AG04450 (cell line): ENCODE measurements at regions of chr7 and their contacts with region 1.

Region 1: DNA sequence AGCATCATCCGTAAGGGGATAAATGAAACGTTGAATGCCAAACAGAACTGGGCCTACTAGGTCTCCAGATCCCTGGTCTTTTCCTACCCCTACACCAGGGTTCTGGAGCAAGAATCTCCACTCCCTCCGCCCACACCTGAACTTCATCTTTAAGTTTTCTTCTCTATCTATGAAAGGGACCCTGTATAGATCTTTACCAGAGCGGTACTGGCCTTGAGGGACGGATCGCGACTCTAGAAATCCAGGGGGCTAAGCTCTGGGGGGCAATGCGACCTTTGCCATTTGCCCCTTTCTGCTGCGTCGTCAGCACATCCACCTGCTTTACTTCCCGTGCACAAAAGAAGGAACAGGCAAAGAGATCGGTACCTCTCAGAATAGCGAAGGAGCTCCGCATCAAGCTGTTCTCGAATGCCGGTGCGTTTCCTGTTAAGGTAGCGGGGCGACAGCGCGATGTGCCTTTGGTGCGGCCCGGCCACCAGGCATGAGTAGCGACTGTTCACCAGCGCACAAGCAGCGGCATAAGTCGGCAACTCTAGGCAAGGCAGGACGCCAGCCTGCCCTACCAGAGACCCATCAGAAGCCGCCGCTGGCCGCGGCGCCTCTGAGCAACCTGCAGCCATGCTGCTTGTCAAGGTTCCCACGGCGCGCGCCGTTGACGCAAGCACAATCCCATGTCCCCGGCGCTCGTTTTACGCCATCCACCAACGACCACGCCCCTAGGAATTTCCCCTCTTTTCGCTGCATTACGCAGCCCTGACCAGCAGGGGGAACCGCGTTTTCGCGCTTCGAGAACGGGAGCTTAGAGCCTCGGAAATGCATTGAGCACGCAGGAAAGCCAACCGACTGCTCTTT is at the start of gene POLR1F:
- DNase-seq: peak; percentile 85
- H3K4me3 ChIP-seq: peak within 1 kb of the TSS; percentile 98
- H3K27ac ChIP-seq: peak within 1 kb of the TSS; percentile 47
- H3K27me3 ChIP-seq: no peaks in the 10 kb centered on the region
- CTCF ChIP-seq: peak; percentile 93
- polyA plus RNA-seq, gene POLR1F: 14.8 and 23.6 TPM in 2 replicates

Region 2: DNA sequence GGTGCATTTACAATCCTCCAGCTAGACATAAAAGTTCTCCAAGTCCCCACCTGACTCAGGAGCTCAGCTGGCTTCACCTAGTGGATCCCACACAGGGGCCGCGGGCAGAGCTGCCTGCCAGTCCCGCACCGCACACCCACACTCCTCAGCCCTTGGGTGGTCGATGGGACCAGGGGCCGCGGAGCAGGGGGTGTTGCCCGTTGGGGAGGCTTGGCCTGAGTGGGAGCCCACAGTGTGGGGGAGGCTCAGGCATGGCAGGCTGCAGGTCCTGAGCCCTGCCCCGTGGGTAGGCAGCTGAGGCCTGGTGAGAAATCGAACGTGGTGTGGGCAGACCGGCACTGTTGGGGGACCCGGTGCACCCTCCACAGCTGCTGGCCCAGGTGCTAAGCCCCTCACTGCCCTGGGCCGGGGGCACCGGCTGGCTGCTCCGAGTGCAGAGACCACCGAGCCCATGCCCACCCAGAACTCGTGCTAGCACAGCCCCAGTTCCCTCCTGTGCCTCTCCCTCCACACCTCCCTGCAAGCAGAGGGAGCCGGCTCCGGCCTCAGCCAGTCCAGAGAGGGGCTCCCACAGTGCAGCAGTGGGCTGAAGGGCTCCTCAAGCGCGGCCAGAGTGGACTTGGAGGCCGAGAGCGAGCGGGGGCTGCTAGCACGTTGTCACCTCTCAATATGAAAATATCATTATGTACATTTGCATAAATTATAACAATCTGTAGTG is 16.4 kb before region 1 on chr7:
- CTCF ChIA-PET with region 1: interaction called, 10 read pairs
- POLR2A ChIA-PET with region 1: interaction called, 3 read pairs
- DNase-seq: no peak
- H3K4me3 ChIP-seq: no peak overlapping the region
- H3K27ac ChIP-seq: no peak overlapping the region
- H3K27me3 ChIP-seq: no peaks in the 10 kb centered on the region
- CTCF ChIP-seq: no peak

Region 3: DNA sequence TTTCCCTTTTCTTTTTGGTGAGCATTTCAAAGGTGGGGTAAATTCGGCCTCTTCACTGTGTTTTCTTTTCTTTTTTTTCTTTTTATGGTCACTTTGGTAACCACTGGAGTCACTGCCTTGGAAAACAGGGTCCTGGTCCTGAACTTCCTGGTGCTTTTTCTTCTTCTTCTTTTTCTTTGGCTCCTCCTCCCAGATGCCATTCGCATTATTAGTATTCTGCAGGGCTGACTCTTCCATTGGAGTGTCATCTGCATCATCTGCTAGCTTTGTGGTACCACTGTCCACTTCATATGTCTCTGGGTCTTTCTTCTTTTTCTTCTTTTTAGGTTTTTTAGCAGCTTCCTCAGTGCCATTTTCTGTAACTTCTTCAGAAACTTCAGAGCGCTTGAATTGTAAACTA is 10.3 kb before region 1 on chr7:
- CTCF ChIA-PET with region 1: interaction called, 35 read pairs
- POLR2A ChIA-PET with region 1: interaction called, 3 read pairs
- DNase-seq: no peak
- H3K4me3 ChIP-seq: no peak overlapping the region
- H3K27ac ChIP-seq: no peak overlapping the region
- H3K27me3 ChIP-seq: no peaks in the 10 kb centered on the region
- CTCF ChIP-seq: no peak

Region 4: GRCh38 chr7:19747740-19748339 is 39.2 kb after region 1 on chr7:
- CTCF ChIA-PET with region 1: interaction called, 26 read pairs
- POLR2A ChIA-PET with region 1: no interaction called
- DNase-seq: no peak
- H3K4me3 ChIP-seq: no peak overlapping the region
- H3K27ac ChIP-seq: no peak overlapping the region
- H3K27me3 ChIP-seq: no peaks in the 10 kb centered on the region
- CTCF ChIP-seq: peak; percentile 62

Region 5: DNA sequence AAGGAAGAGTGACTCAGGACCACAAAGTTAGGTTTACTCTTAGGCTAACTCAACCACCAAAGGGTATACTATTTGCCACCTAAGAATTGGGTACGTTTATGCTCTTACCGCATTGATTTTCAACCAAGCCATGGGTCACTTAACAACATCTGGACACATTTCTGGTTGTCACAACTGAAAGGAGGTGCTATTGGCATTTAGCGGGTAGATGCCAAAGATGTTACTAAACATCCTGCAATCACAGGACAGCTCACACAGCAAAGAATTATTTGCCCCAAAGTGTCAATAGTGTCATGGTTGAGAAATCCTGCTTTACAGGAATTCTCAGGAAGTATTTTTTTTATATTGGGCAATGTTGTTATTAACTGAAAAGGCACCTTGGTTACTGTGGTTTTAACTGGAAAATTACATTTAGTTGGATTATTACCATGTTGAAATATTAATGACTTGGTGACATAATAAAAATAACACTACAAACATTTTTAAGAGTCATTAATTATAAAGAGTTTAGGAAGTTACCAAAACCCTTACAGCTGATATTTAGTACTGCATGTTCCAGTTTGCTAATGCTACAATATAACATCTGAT is 249.8 kb after region 1 on chr7:
- CTCF ChIA-PET with region 1: no interaction called
- POLR2A ChIA-PET with region 1: no interaction called
- DNase-seq: no peak
- H3K4me3 ChIP-seq: no peak overlapping the region
- H3K27ac ChIP-seq: no peak overlapping the region
- H3K27me3 ChIP-seq: no peaks in the 10 kb centered on the region
- CTCF ChIP-seq: no peak